B cell (primary cell): ENCODE measurements at regions of chr1 and their contacts with region 1.

Region 1: DNA sequence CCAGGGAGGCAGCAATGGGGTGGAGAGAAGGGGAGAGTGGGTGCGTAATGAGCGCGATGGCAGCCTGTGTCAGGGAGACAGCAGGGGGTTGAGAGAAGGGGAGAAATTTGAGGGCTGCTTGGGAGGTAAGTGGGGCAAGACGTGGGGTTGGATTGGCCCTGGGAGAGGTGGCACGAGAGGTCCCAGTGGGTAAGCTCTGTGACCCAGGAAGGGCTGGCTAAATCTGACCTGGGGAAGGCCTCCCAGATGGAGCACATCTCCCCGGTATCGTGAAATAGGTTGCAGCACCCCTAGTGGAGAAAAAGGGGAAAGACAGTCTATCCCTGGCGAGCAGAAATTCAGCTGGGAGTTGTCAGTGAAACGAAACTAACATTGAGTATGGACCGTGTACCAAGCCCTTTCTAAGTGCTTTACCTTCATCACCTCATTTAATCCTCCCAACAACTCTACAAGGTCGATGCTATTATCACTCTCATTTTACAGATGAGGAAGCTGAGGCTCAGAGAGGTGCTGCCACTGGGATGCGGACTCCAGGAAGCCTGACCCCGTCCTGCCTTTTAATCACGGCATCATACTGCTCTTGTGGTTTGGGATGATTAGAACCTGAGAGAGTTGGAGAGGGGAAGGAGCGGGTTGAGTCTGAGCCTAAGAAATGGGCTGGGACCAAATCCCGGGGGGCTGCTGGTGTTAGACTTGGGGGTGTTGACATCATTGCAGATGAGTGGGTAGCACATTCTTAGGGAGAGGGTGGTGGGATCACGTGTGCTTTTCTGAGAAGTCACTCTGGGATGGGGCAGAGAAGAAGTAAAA is 56.6 kb upstream of the RPL11 start:
- DNase-seq: peak; percentile 84
- ATAC-seq: peak; percentile 87
- H3K4me3 ChIP-seq: peak overlapping the region in 4 of 5 experiments; percentile 18 to 66 (median 46)
- H3K4me3 Mint-ChIP-seq: peak overlapping the region; percentile 78
- H3K27ac ChIP-seq: peak overlapping the region; percentile 43 to 74
- H3K27ac Mint-ChIP-seq: peak overlapping the region; percentile 94
- H3K4me1 ChIP-seq: peaks cover 29 to 50% of the 10 kb centered on the region in 2 donors
- H3K4me1 Mint-ChIP-seq: peaks cover 51% of the 10 kb centered on the region
- H3K27me3 ChIP-seq: no peaks in the 10 kb centered on the region
- H3K27me3 Mint-ChIP-seq: no peaks in the 10 kb centered on the region
- CTCF ChIP-seq: peak; percentile 86

Region 2: DNA sequence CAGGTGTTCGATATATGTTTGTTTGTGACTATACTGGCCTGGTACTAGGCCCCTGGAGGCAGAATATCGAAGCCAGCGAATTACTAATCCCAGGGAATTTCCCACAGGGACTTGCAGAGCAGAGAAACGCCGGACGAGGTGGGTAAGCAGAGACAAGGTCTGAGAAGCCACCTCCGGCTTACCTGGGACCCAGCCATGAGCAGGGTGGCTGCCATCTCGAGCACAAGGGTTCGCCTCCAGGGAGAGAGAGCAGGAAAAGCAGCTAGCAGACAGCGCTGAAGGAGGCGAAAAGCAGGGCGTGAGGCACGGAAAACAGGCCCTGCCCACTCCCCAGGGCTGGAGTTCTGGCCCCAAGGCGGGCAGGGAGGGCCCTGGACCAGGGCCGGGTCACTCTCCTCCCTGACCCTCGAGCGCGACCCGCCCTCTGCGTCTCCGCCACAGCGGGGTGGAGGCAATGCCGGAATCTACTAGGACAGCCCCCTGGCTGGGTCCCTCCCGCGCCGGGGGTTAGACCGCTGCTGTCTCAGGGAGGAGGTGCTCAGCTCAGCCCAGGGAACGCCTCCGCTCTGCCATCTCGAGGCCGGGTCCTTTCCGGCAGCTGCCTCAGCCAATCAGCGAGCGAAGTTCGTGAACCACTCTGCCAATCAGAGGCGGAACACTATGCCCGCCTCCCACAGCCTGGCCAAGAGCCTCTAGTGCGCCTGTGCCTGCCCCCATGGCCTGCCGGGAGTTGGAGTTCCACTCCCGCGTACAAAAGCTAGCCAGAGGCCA is 267.1 kb before region 1 on chr1:
- CTCF ChIA-PET with region 1: interaction called, 3 read pairs
- POLR2A ChIA-PET with region 1: no interaction called
- intact Hi-C with region 1: loop called (anchors 5 kb)
- DNase-seq: peak; percentile 98
- ATAC-seq: peak; percentile 87
- H3K4me3 ChIP-seq: peak overlapping the region; percentile 93 to 100 (median 97)
- H3K4me3 Mint-ChIP-seq: peak overlapping the region; percentile 98
- H3K27ac ChIP-seq: peak overlapping the region; percentile 81 to 85
- H3K27ac Mint-ChIP-seq: peak overlapping the region; percentile 99
- H3K4me1 ChIP-seq: peaks cover 12 to 19% of the 10 kb centered on the region in 2 donors
- H3K4me1 Mint-ChIP-seq: peaks cover 33% of the 10 kb centered on the region
- H3K27me3 ChIP-seq: no peaks in the 10 kb centered on the region
- H3K27me3 Mint-ChIP-seq: no peaks in the 10 kb centered on the region
- CTCF ChIP-seq: no peak

Region 3: GRCh38 chr1:23530747-23531561 is 104.1 kb before region 1 on chr1 and contains the start of gene E2F2:
- CTCF ChIA-PET with region 1: interaction called, 24 read pairs
- POLR2A ChIA-PET with region 1: no interaction called
- intact Hi-C with region 1: no loop called
- DNase-seq: peak; percentile 91
- ATAC-seq: peak; percentile 83
- H3K4me3 ChIP-seq: peak within 1 kb of the TSS; percentile 40 to 71 (median 63)
- H3K4me3 Mint-ChIP-seq: peak within 1 kb of the TSS; percentile 85
- H3K27ac ChIP-seq: no peak within 1 kb of the TSS
- H3K27ac Mint-ChIP-seq: peak within 1 kb of the TSS; percentile 61
- H3K4me1 ChIP-seq: peaks cover 69 to 75% of the 10 kb centered on the region in 2 donors
- H3K4me1 Mint-ChIP-seq: peaks cover 79% of the 10 kb centered on the region
- H3K27me3 ChIP-seq: peaks cover 0 to 7% (median 0%) of the 10 kb centered on the region in 4 experiments
- H3K27me3 Mint-ChIP-seq: no peaks in the 10 kb centered on the region
- CTCF ChIP-seq: no peak
- total RNA-seq, gene E2F2: 1.2 and 3.2 TPM in 2 replicates

Region 4: DNA sequence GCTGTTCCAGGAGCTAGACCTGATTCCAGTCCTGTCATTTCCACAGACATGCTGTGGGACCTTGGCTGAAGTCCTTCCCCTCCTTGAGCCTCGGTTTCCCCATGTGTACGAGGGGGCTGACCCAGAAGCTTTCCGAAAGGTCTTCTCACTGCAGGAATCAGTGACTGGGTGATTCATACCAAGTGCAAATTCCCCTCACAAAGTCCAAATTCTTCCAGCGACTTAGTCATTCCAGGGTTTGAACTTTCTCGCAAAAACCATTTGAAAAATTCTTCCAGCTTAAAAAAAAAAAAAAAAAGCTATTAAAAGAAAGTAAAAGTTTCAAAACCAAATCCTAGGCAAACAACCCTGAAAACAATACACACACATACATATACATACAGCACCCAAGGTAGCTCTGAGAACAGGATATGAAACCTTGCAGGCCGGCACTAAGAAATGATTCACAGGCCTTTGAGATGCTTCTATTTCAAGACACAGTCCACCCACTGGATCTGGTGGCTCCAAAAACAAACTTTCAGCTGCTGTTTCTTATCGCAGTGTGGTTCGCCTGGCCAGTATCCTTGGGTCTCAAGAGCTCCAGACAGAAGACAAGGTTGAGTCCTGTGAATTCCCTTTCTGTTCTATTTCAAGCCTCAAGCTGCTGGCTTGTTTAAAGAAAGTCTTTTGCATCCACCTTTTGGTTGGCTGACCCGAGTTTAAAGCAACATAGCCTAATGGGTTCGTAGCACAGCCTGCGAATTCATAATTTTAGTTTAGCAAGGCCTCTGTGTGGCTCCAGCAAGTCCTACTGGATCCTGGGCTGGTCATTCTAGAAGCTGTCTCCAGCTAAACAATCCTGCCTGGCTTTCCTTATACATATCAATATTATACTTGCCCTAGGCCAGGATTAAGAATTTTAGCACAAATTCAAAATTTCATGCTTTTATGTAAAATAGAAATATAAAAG is 57.7 kb before region 1 on chr1:
- CTCF ChIA-PET with region 1: interaction called, 1,420 read pairs
- POLR2A ChIA-PET with region 1: interaction called, 13 read pairs
- intact Hi-C with region 1: no loop called
- DNase-seq: peak; percentile 80
- ATAC-seq: peak; percentile 85
- H3K4me3 ChIP-seq: peak overlapping the region in 4 of 5 experiments; percentile 13 to 53 (median 20)
- H3K4me3 Mint-ChIP-seq: peak overlapping the region; percentile 83
- H3K27ac ChIP-seq: peak overlapping the region; percentile 75 to 83
- H3K27ac Mint-ChIP-seq: peak overlapping the region; percentile 98
- H3K4me1 ChIP-seq: peaks cover 78 to 85% of the 10 kb centered on the region in 2 donors
- H3K4me1 Mint-ChIP-seq: peaks cover 85% of the 10 kb centered on the region
- H3K27me3 ChIP-seq: no peaks in the 10 kb centered on the region
- H3K27me3 Mint-ChIP-seq: no peaks in the 10 kb centered on the region
- CTCF ChIP-seq: no peak

Region 5: GRCh38 chr1:23619299-23620188 is 15.5 kb before region 1 on chr1:
- CTCF ChIA-PET with region 1: interaction called, 160 read pairs
- POLR2A ChIA-PET with region 1: interaction called, 23 read pairs
- intact Hi-C with region 1: loop called (anchors 2 kb)
- DNase-seq: peak; percentile 89
- ATAC-seq: peak; percentile 88
- H3K4me3 ChIP-seq: peak overlapping the region in 4 of 5 experiments; percentile 29 to 59 (median 50)
- H3K4me3 Mint-ChIP-seq: peak overlapping the region; percentile 82
- H3K27ac ChIP-seq: peak overlapping the region; percentile 93 to 94
- H3K27ac Mint-ChIP-seq: peak overlapping the region; percentile 98
- H3K4me1 ChIP-seq: peaks cover 77 to 93% of the 10 kb centered on the region in 2 donors
- H3K4me1 Mint-ChIP-seq: peaks cover 87% of the 10 kb centered on the region
- H3K27me3 ChIP-seq: no peaks in the 10 kb centered on the region
- H3K27me3 Mint-ChIP-seq: no peaks in the 10 kb centered on the region
- CTCF ChIP-seq: no peak

Region 6: GRCh38 chr1:23751050-23751814 is 116.2 kb after region 1 on chr1:
- CTCF ChIA-PET with region 1: interaction called, 11 read pairs
- POLR2A ChIA-PET with region 1: no interaction called
- intact Hi-C with region 1: loop called (anchors 1 kb)
- DNase-seq: peak; percentile 69
- ATAC-seq: peak; percentile 79
- H3K4me3 ChIP-seq: no peak overlapping the region
- H3K4me3 Mint-ChIP-seq: no peak overlapping the region
- H3K27ac ChIP-seq: peak overlapping the region in 1 of 2 donors; percentile 52
- H3K27ac Mint-ChIP-seq: peak overlapping the region; percentile 21
- H3K4me1 ChIP-seq: peaks cover 10 to 15% of the 10 kb centered on the region in 2 donors
- H3K4me1 Mint-ChIP-seq: peaks cover 33% of the 10 kb centered on the region
- H3K27me3 ChIP-seq: no peaks in the 10 kb centered on the region
- H3K27me3 Mint-ChIP-seq: no peaks in the 10 kb centered on the region
- CTCF ChIP-seq: peak; percentile 85